Pancreas (tissue), 10 donors: ENCODE measurements at regions of chr2 and their contacts with region 1.

Region 1: DNA sequence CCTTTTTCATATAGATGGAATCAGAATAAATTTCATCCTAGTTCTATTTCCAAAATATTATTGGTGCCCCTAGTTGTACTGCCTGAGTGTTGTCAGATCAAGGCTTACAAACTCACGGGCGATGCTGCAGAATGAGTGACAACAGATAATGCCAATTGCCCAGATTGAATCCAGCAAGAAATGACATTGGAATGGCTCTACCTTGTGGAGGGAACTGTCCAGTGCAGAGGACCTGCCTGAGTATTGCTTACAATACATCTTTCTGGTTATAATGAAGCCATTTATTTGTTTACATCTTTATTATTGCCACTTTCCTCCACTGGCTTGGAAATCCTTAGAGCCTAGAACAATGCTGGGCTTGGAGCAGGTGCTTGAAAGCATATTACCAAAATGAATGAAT is 7.8 kb upstream of the IL1R2 start:
- DNase-seq: no peak
- ATAC-seq: peak in 2 of 4 donors; percentile 18 to 36
- H3K4me3 ChIP-seq: no peak overlapping the region
- H3K27ac ChIP-seq: no peak overlapping the region
- H3K4me1 ChIP-seq: no peaks in the 10 kb centered on the region
- H3K27me3 ChIP-seq: no peaks in the 10 kb centered on the region
- CTCF ChIP-seq: no peak

Region 2: GRCh38 chr2:101736861-101737291 is 247.1 kb before region 1 on chr2:
- intact Hi-C with region 1: no loop called
- DNase-seq: no peak
- ATAC-seq: peak in 3 of 4 donors; percentile 33 to 65 (median 42)
- H3K4me3 ChIP-seq: no peak overlapping the region
- H3K27ac ChIP-seq: peak overlapping the region in 2 of 4 donors; percentile 7 to 44
- H3K4me1 ChIP-seq: peaks cover 11 to 58% (median 31%) of the 10 kb centered on the region in 3 donors
- H3K27me3 ChIP-seq: no peaks in the 10 kb centered on the region
- CTCF ChIP-seq: no peak

Region 3: GRCh38 chr2:101893681-101894381 is 90.1 kb before region 1 on chr2:
- intact Hi-C with region 1: loop called in 1 of 3 experiments (anchors 10 kb)
- DNase-seq: no peak
- ATAC-seq: no peak
- H3K4me3 ChIP-seq: no peak overlapping the region
- H3K27ac ChIP-seq: no peak overlapping the region
- H3K4me1 ChIP-seq: no peaks in the 10 kb centered on the region
- H3K27me3 ChIP-seq: no peaks in the 10 kb centered on the region
- CTCF ChIP-seq: no peak